ENCODE measurements at regions of chrX and their contacts with region 1.

Region 1: GRCh38 chrX:73943693-73944562 is 360.1 kb upstream of the ZCCHC13 start:
- DNase-seq: peak; percentile 64
- ATAC-seq: peak; percentile 98
- H3K4me3 ChIP-seq: peak overlapping the region; percentile 79
- H3K27ac ChIP-seq: peak overlapping the region; percentile 87
- H3K4me1 ChIP-seq: 0 out of 2 replicates have a peak, but pooled peaks cover 3% of the 10 kb centered on the region
- H3K27me3 ChIP-seq: no peaks in the 10 kb centered on the region
- CTCF ChIP-seq: no peak
- EP300 ChIP-seq: peak in 1 of 2 experiments; percentile 58; a peak in 3 of 4 replicates
- POLR2A ChIP-seq: peak; percentile 95
- RAD21 ChIP-seq: no peak

Region 2: DNA sequence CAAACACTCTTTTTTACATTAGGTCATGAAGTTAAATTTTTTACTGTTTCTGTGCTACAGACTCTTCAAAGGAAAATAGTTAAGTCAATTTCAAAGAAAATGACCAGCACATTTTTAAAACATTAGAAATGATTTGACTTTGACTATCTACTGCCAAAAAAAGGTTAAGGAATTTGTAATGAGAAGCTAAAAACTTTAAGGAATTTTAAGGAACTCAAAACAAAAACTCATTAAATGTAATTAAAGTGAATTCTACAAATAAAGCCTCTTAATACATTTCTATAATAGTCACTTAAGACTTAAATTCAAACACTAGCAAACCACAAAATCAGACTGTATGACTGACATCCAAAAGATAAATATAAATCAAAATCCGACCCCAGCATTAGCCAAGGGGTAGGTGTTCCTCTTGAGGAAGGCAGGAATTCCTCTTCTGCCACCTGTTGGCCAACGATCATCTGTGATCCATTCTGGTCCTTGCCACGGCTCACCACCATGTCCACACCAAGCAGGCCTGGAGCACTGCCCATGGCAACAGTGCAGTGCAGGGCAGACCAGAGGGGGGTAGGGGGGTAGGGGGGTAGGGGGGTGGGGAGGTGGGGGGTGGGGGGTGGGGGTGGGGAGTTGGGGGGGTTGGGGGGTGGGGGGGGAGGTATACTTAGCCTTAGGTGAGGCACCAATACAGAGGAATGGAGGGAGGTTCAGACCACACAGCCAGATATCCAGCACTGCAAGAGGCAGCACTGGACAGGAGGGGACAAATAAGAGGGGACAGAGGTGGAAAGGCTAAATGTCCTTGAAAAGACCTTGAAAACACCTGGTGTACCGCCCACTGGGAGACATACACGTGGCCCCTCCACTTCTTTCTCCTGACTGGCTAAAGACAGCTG is 93.6 kb before region 1 on chrX:
- CTCF ChIA-PET with region 1: interaction called, 4 read pairs
- POLR2A ChIA-PET with region 1: no interaction called
- RAD21 ChIA-PET with region 1: no interaction called
- SMC1A ChIA-PET with region 1: no interaction called
- in situ Hi-C with region 1: no loop called
- intact Hi-C with region 1: loop called (anchors 1 kb)
- DNase-seq: peak; percentile 62
- ATAC-seq: peak; percentile 8; the same call in 2 of the 3 replicates
- H3K4me3 ChIP-seq: peak overlapping the region; percentile 60
- H3K27ac ChIP-seq: no peak overlapping the region
- H3K4me1 ChIP-seq: no peaks in the 10 kb centered on the region
- H3K27me3 ChIP-seq: no peaks in the 10 kb centered on the region
- CTCF ChIP-seq: peak; percentile 15 to 46 (median 21); a peak in 3 of 6 replicates
- EP300 ChIP-seq: no peak
- POLR2A ChIP-seq: no peak
- RAD21 ChIP-seq: peak; percentile 39; the same call in 1 of the 2 replicates

Region 3: DNA sequence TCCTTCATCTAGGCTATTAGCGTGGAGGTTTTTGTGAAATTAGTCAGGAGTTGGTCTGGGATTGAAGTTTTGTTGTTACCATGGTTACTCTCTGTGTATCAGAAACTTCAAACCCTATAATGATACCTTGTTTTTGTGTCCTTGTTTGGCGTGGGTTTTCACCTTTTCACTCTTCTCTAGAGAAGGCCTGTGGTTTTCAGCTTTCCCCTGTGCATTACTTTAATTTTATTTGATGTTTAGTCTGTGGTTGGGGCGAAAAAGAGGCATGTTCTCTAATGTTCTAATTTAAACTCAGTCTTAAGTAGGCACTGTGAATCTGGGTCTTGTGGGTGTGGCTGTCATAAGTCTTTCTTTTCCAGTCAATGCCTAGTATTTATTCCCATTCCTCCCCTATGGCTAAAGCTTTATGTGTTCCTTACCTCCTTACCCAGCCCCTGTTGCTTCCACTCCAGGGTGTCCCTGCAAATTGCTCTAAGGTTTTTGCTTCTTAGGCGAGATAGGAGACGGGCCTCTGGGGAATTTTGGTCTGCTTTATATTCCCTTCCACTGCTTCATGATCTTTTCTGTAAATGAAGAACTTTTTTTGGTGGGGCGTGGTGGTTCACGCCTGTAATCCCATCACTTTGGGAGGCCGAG is 33.7 kb after region 1 on chrX:
- CTCF ChIA-PET with region 1: interaction called, 4 read pairs
- POLR2A ChIA-PET with region 1: no interaction called
- RAD21 ChIA-PET with region 1: no interaction called
- SMC1A ChIA-PET with region 1: interaction called, 8 read pairs
- in situ Hi-C with region 1: no loop called
- intact Hi-C with region 1: loop called (anchors 5 kb)
- DNase-seq: peak; percentile 46
- ATAC-seq: peak; percentile 97
- H3K4me3 ChIP-seq: no peak overlapping the region
- H3K27ac ChIP-seq: no peak overlapping the region
- H3K4me1 ChIP-seq: peaks cover 8% of the 10 kb centered on the region
- H3K27me3 ChIP-seq: no peaks in the 10 kb centered on the region
- CTCF ChIP-seq: no peak
- EP300 ChIP-seq: peak; percentile 14 to 60; a peak in 2 of 4 replicates
- POLR2A ChIP-seq: no peak
- RAD21 ChIP-seq: no peak

Region 4: DNA sequence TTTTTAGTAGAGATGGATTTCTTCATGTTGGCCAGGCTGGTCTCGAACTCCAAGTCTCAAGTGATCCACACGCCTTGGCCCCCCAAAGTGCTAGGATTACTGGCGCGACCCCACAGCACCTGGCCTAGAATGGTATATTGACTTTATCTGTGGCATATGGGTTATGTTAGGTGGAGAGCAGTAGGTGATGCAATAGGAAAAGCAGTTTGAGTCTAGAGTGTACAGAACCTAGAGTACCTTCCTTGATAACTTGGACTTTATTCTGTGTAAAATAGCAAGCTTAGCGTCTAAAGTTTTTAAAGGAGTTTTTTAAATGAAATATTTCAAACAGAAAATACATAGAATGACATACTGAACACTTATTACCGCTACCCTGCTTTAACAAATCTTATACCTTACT is 48.1 kb after region 1 on chrX:
- CTCF ChIA-PET with region 1: no interaction called
- POLR2A ChIA-PET with region 1: interaction called, 3 read pairs
- RAD21 ChIA-PET with region 1: no interaction called
- SMC1A ChIA-PET with region 1: interaction called, 4 read pairs
- in situ Hi-C with region 1: no loop called
- intact Hi-C with region 1: loop called (anchors 5 kb)
- DNase-seq: no peak
- ATAC-seq: no peak
- H3K4me3 ChIP-seq: no peak overlapping the region
- H3K27ac ChIP-seq: no peak overlapping the region
- H3K4me1 ChIP-seq: 0 out of 2 replicates have a peak, but pooled peaks cover 3% of the 10 kb centered on the region
- H3K27me3 ChIP-seq: no peaks in the 10 kb centered on the region
- CTCF ChIP-seq: no peak
- EP300 ChIP-seq: no peak
- POLR2A ChIP-seq: no peak
- RAD21 ChIP-seq: no peak

Measured in GM12878 (cell line).